Activated naive CD4-positive, alpha-beta T cell treated with anti-CD3 and anti-CD28 coated beads, Interleukin-2, amount 10 ng/mL, durations not matched to agents 7 days and 5 days (primary cell): ENCODE measurements at regions of chr3 and their contacts with region 1.

Region 1: GRCh38 chr3:38004415-38005076 is 14.0 kb downstream of the VILL start:
- DNase-seq: peak; percentile 75
- H3K4me3 Mint-ChIP-seq: no peak overlapping the region
- H3K27ac Mint-ChIP-seq: no peak overlapping the region
- H3K4me1 Mint-ChIP-seq: peaks cover 12% of the 10 kb centered on the region
- H3K27me3 Mint-ChIP-seq: no peaks in the 10 kb centered on the region

Region 2: GRCh38 chr3:37601832-37602231 is 402.7 kb before region 1 on chr3:
- CTCF ChIA-PET with region 1: no interaction called
- DNase-seq: no peak
- H3K4me3 Mint-ChIP-seq: no peak overlapping the region
- H3K27ac Mint-ChIP-seq: no peak overlapping the region
- H3K4me1 Mint-ChIP-seq: no peaks in the 10 kb centered on the region
- H3K27me3 Mint-ChIP-seq: peaks cover 4% of the 10 kb centered on the region

Region 3: GRCh38 chr3:37833302-37834186 is 171.0 kb before region 1 on chr3:
- CTCF ChIA-PET with region 1: no interaction called
- DNase-seq: no peak
- H3K4me3 Mint-ChIP-seq: no peak overlapping the region
- H3K27ac Mint-ChIP-seq: no peak overlapping the region
- H3K4me1 Mint-ChIP-seq: no peaks in the 10 kb centered on the region
- H3K27me3 Mint-ChIP-seq: no peaks in the 10 kb centered on the region

Region 4: GRCh38 chr3:37855363-37855970 is 149.1 kb before region 1 on chr3:
- CTCF ChIA-PET with region 1: interaction called, 18 read pairs
- DNase-seq: peak; percentile 83
- H3K4me3 Mint-ChIP-seq: no peak overlapping the region
- H3K27ac Mint-ChIP-seq: no peak overlapping the region
- H3K4me1 Mint-ChIP-seq: peaks cover 6% of the 10 kb centered on the region
- H3K27me3 Mint-ChIP-seq: peaks cover 27% of the 10 kb centered on the region

Region 5: DNA sequence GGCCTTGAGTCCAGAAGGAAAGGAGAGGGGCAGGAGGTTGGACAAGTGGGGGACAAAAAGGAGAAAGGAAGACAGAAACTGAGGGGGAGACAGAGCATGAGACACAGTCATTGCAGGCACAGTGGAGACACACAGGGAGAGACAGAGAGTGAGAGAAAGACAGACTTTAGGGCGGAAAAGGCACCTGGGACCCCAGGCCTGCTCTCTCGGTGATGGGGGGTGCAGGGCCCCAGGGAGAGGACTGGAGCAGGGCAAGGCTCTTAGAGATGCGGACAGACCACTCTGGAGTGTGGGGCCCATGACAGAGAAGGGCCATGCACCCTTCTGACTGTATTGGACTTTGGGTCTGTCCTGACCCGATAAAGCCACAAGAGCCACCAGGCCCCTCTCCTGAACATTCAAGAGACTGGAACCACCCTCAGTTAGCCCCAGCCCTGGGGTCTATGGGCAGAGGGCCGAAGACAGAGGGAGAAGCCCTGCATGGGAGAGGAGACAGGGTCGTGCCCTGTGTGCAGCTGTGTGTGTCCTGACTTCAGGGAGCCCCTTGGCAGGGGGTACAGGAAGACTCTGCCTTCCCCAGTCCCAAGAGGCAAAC is 12.4 kb after region 1 on chr3:
- CTCF ChIA-PET with region 1: interaction called, 11 read pairs
- DNase-seq: no peak
- H3K4me3 Mint-ChIP-seq: no peak overlapping the region
- H3K27ac Mint-ChIP-seq: no peak overlapping the region
- H3K4me1 Mint-ChIP-seq: peaks cover 7% of the 10 kb centered on the region
- H3K27me3 Mint-ChIP-seq: no peaks in the 10 kb centered on the region

Region 6: DNA sequence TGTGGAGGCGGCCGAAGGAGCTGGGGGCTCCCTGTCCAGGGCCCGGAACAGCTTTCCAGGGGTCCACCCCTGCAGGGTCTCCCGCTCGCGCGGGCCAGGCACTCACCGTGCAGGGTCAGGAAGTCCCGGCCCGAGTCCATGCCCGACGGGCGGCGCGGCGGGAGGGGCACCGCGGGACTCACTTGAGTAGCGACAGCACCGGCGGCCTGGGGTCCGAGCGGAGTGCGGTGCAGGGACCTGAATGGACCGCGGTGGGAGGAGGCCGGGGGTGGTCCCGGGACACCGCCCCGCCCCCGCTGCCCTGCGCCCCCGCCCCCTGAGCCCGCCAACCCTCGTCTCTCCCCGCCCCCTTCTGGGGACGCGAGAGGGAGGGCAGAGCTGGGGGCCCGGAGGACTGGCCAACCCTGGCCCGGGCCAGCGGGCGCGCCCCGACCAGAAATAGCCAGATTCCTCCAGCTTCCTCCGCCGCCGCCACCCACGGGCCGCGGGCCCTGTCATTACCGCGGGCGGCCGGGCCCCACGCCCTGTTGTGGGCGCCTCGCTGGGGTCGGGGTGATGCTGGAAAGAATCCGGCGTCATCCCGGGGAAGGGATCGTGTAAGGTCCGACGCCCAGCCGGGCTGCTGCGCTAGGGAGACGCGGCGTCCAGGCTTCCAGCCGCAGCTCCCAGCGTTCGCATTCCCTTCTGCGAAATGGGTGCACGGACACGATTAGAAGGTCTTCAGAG is 25.0 kb after region 1 on chr3 and contains the start of gene PLCD1:
- CTCF ChIA-PET with region 1: no interaction called
- DNase-seq: peak; percentile 68
- H3K4me3 Mint-ChIP-seq: peak within 1 kb of the TSS; percentile 45
- H3K27ac Mint-ChIP-seq: no peak within 1 kb of the TSS
- H3K4me1 Mint-ChIP-seq: peaks cover 50% of the 10 kb centered on the region
- H3K27me3 Mint-ChIP-seq: peaks cover 69% of the 10 kb centered on the region

Region 7: GRCh38 chr3:38805765-38806386 is 801.3 kb after region 1 on chr3:
- CTCF ChIA-PET with region 1: no interaction called
- DNase-seq: peak; percentile 73
- H3K4me3 Mint-ChIP-seq: no peak overlapping the region
- H3K27ac Mint-ChIP-seq: no peak overlapping the region
- H3K4me1 Mint-ChIP-seq: no peaks in the 10 kb centered on the region
- H3K27me3 Mint-ChIP-seq: no peaks in the 10 kb centered on the region